ENCODE measurements at regions of chr4 and their contacts with region 1.

Region 1: DNA sequence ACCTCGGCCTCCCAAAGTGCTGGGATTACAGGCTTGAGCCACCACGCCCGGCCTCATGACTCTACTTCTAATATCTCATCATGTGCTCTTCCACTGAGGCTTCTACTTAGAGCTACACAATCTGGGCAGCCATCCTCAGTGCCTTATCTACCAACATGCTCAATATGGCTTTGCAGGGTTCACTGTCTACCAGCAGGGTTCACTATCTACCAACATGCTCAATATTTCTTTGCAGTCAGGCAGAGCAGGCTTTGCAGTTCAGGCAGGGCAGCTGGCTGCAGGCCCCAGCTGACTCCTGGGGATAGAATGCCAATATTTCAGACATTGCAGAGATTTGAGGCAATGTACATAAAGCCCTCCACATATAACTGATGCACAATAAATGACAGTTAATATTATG is 47.5 kb downstream of the PKD2 start:
- DNase-seq: peak; percentile 23
- ATAC-seq: peak; percentile 97
- H3K4me3 Mint-ChIP-seq: no peak overlapping the region
- H3K27ac Mint-ChIP-seq: no peak overlapping the region
- H3K4me1 Mint-ChIP-seq: no peaks in the 10 kb centered on the region
- H3K27me3 Mint-ChIP-seq: no peaks in the 10 kb centered on the region
- CTCF ChIP-seq: 0 out of 2 replicates have a peak, but pooled peaks have one; percentile 21

Region 2: GRCh38 chr4:87911252-87911774 is 143.6 kb before region 1 on chr4:
- CTCF ChIA-PET with region 1: no interaction called
- POLR2A ChIA-PET with region 1: no interaction called
- DNase-seq: no peak
- ATAC-seq: no peak
- H3K4me3 Mint-ChIP-seq: no peak overlapping the region
- H3K27ac Mint-ChIP-seq: peak overlapping the region; percentile 67
- H3K4me1 Mint-ChIP-seq: peaks cover 54% of the 10 kb centered on the region
- H3K27me3 Mint-ChIP-seq: no peaks in the 10 kb centered on the region
- CTCF ChIP-seq: no peak

Region 3: GRCh38 chr4:87975466-87975865 is 79.4 kb before region 1 on chr4 and contains the start of gene SPP1:
- CTCF ChIA-PET with region 1: no interaction called
- POLR2A ChIA-PET with region 1: no interaction called
- DNase-seq: peak; percentile 63
- ATAC-seq: peak; percentile 95
- H3K4me3 Mint-ChIP-seq: peak within 1 kb of the TSS; percentile 54
- H3K27ac Mint-ChIP-seq: peak within 1 kb of the TSS; percentile 94
- H3K4me1 Mint-ChIP-seq: peaks cover 51% of the 10 kb centered on the region
- H3K27me3 Mint-ChIP-seq: no peaks in the 10 kb centered on the region
- CTCF ChIP-seq: no peak
- total RNA-seq, gene SPP1: 24.5 to 56.6 TPM (median 31.8 TPM) in 3 replicates

Region 4: GRCh38 chr4:88084410-88084809 is 29.5 kb after region 1 on chr4:
- CTCF ChIA-PET with region 1: no interaction called
- POLR2A ChIA-PET with region 1: no interaction called
- DNase-seq: no peak
- ATAC-seq: no peak
- H3K4me3 Mint-ChIP-seq: no peak overlapping the region
- H3K27ac Mint-ChIP-seq: no peak overlapping the region
- H3K4me1 Mint-ChIP-seq: no peaks in the 10 kb centered on the region; the same call in 1 of the 2 replicates
- H3K27me3 Mint-ChIP-seq: no peaks in the 10 kb centered on the region
- CTCF ChIP-seq: no peak

Region 5: DNA sequence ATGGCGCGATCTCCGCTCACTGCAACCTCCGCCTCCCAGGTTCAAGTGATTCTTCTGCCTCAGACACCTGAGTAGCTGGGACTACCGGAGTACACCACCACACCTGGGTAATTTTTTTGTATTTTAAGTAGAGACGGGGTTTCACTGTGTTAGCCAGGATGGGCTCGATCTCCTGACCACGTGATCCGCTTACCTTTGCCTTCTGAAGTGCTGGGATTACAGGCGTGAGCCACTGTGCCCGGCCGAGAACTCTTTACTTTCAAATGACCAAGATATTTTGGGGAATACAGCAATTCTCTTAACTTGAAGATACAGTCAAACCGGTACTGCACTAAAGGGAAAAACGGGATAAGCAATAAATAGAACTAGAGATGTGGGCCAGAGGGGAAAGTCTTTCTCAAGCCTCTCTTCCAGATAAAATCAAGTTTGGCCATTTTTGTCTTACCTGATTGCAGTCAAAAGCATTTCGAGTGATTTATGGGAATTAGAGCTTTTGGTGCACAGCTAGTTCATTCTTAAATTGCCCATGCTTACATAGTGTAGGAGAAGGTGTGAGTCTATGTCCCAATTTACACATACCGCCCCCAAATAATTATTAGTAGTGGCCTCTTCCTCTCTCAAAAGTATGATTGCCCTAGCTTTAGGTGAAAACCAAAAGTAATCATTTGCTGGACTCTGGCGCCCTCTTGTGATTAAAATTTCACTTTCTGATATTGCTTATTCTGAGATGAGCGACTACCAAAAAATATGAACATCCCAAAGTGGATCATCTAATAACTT is 156.8 kb after region 1 on chr4:
- CTCF ChIA-PET with region 1: interaction called, 47 read pairs
- POLR2A ChIA-PET with region 1: no interaction called
- DNase-seq: no peak
- ATAC-seq: peak; percentile 70
- H3K4me3 Mint-ChIP-seq: no peak overlapping the region
- H3K27ac Mint-ChIP-seq: peak overlapping the region; percentile 25; the same call in 1 of the 2 replicates
- H3K4me1 Mint-ChIP-seq: peaks cover 2% of the 10 kb centered on the region; the same call in 1 of the 2 replicates
- H3K27me3 Mint-ChIP-seq: no peaks in the 10 kb centered on the region
- CTCF ChIP-seq: peak; percentile 68